PC-9 (cell line): ENCODE measurements at regions of chr5 and their contacts with region 1.

Region 1: DNA sequence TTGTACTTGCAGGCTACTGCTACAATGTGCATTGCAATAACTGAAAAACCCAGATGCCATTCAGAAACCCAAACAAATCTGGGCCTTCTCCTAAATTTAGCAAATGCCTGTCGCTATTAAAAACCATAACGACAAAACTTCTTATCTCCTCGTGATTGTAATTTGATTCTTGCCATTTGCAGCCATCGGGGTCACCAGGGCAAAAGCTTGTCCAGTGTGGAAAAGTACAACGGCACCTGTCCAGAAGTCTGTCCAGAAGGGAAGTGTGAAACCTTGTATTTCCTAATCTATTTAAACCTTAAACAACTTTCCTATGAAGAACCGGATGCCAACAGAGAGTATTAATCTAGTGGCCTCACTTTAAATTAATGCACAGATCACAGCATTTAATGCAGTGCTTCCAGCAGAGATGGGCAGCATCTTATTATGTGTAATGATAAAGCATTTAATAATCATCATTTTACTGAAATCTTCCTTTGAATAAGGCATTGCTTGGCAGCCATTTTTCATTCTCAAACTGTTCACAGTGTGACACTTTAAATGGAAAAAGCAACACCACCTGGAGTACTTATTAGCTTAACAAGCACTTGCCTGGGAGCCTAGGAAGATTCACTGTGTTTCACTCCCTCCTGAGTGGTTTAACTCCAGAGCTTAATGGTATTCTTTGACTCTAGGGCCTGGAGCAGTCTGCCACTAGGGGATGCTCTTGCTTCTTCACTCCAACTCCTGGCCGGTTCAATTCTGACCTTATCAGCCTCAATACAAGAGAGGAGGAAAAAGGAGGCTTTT is 4.9 kb upstream of the C7 start:
- DNase-seq: peak; percentile 60 to 79
- H3K4me3 ChIP-seq: no peak overlapping the region
- H3K27ac ChIP-seq: no peak overlapping the region
- H3K4me1 ChIP-seq: no peaks in the 10 kb centered on the region
- H3K27me3 ChIP-seq: no peaks in the 10 kb centered on the region
- CTCF ChIP-seq: peak; percentile 98

Region 2: DNA sequence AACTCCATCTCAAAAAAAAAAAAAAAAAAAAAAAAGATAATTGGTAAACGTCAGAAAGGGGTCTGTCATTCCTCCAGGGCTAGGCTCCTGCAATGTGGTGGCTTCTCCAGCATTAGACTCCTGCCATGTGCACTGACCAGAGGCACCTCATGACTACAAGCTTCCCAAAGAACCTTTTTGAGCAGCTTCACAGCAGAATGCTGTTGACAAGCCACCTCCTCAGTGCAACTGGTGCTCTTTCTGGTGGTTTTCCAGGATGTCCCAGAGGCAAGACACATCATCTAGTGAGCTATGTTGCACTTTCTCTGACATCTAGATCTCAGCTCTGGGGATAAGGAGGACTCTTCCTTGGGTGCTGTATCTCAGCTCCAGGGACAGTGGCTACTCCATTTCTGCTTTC is 80.9 kb before region 1 on chr5:
- CTCF ChIA-PET with region 1: no interaction called
- POLR2A ChIA-PET with region 1: no interaction called
- intact Hi-C with region 1: no loop called
- DNase-seq: no peak
- H3K4me3 ChIP-seq: no peak overlapping the region
- H3K27ac ChIP-seq: 0 out of 2 replicates have a peak overlapping the region, but pooled peaks have one; percentile 4
- H3K4me1 ChIP-seq: no peaks in the 10 kb centered on the region
- H3K27me3 ChIP-seq: no peaks in the 10 kb centered on the region
- CTCF ChIP-seq: no peak

Region 3: GRCh38 chr5:41122459-41122858 is 218.1 kb after region 1 on chr5:
- CTCF ChIA-PET with region 1: interaction called, 5 read pairs
- POLR2A ChIA-PET with region 1: no interaction called
- intact Hi-C with region 1: loop called (anchors 1 kb)
- DNase-seq: no peak
- H3K4me3 ChIP-seq: no peak overlapping the region
- H3K27ac ChIP-seq: no peak overlapping the region
- H3K4me1 ChIP-seq: no peaks in the 10 kb centered on the region
- H3K27me3 ChIP-seq: no peaks in the 10 kb centered on the region
- CTCF ChIP-seq: no peak

Region 4: GRCh38 chr5:41346609-41347008 is 442.2 kb after region 1 on chr5:
- CTCF ChIA-PET with region 1: no interaction called
- POLR2A ChIA-PET with region 1: no interaction called
- intact Hi-C with region 1: loop called (anchors 1 kb)
- DNase-seq: no peak
- H3K4me3 ChIP-seq: no peak overlapping the region
- H3K27ac ChIP-seq: no peak overlapping the region
- H3K4me1 ChIP-seq: no peaks in the 10 kb centered on the region
- H3K27me3 ChIP-seq: no peaks in the 10 kb centered on the region
- CTCF ChIP-seq: no peak

Region 5: GRCh38 chr5:41641621-41642020 is 737.2 kb after region 1 on chr5:
- CTCF ChIA-PET with region 1: interaction called, 7 read pairs
- POLR2A ChIA-PET with region 1: no interaction called
- intact Hi-C with region 1: loop called (anchors 1 kb)
- DNase-seq: no peak
- H3K4me3 ChIP-seq: no peak overlapping the region
- H3K27ac ChIP-seq: no peak overlapping the region
- H3K4me1 ChIP-seq: no peaks in the 10 kb centered on the region
- H3K27me3 ChIP-seq: no peaks in the 10 kb centered on the region
- CTCF ChIP-seq: peak; percentile 63